Left cardiac atrium (tissue), 4 donors: ENCODE measurements at regions of chr1 and their contacts with region 1.

Region 1: DNA sequence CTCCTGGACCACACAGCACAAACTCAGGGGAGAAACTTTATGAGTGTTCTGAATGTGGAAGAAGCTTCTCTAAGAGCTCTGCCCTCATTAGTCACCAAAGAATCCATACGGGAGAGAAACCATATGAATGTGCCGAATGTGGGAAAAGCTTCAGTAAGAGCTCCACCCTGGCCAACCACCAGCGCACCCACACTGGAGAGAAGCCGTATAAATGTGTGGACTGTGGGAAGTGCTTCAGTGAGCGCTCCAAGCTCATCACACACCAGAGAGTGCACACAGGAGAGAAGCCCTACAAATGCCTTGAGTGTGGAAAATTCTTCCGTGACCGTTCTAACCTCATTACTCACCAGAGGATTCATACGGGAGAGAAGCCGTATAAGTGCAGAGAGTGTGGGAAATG is 22.5 kb downstream of the ZSCAN20 start:
- DNase-seq: no peak
- ATAC-seq: no peak

Region 2: DNA sequence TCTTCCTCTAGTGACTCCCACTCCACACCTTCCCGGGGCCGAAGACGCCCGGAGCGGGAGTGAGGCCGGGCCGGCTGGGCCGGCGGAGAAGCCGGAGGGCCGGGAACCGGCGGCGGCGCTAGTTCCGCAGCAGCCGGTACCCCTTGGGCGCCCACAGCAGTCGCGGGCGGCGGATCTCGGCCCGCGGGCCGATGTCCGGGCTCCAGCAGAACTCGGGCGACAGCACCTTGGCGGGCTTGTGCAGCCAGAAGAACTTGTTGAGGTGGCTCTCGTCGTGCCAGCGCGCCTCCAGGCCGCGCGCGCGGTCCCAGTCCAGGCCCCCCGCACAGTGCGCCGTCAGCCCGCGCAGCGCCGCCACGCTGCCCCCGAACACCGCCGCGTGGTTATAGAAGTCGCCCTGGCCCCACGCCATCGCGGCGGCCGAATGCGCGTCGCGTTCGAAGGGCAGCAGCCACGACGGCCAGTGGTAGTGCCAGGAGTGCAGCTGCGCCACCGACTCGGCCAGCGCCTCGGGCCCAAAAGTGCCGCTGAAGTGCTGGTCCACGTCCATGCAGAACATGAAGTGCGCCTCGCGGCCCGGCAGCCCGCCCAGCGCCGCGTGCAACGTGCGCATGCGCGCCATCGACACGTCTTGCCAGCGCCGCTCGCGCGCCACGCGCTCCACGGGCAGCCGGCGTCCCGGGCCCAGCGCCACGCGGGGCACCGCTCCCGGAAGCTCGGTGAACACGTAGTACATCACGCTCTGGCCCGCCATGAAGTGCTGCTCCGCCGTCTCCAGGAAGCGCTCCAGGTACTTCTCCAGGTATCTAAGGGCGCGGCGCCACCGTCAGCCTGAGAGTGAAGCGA is 188.1 kb before region 1 on chr1:
- intact Hi-C with region 1: no loop called
- DNase-seq: no peak
- ATAC-seq: peak; percentile 53 to 60

Region 3: DNA sequence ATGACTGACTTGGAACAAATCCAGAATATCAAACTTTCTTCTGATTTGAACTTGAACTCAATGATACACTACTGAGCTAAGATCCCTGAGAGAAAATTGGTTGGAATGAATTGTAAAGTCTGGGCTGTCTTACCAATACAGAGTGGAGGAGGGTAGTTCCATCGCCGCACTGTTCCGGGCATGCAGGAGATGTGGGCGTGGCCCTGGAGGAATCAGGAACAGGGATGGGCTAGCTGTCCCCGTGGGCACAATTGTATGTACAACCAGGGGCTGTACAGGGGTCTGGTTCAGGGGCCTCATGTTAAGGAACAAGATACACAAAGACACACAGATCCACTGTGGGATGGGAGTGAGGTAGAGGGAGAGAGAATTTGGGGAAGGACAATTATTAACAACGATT is 121.8 kb after region 1 on chr1:
- intact Hi-C with region 1: loop called in 1 of 2 experiments (anchors 10 kb)
- DNase-seq: no peak
- ATAC-seq: peak in 1 of 2 donors; percentile 38